Left ventricle myocardium superior (tissue), 1 donor: ENCODE measurements at regions of chr3 and their contacts with region 1.

Region 1: GRCh38 chr3:1529666-1530065 is 436.8 kb downstream of the CNTN6 start:
- DNase-seq: no peak
- ATAC-seq: no peak

Region 2: DNA sequence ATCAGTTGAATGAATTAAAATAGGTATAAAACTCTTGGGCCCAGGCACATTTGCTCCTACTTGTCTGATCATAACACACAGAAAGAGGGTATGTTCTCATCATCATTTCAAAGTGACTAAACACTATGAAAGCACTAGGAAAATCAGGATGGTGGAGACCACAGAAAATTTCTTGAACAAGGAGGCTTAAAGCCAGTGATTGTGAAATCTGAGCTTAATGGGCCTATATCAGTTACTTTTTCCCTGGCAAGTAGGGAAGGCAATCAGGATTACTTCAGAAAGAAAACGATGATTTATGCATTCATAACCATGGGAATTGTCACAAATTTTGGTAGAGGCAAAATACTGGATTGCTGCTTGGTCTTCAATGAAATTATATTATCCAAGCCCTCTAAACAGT is 134.6 kb after region 1 on chr3:
- intact Hi-C with region 1: no loop called
- DNase-seq: no peak
- ATAC-seq: no peak

Region 3: DNA sequence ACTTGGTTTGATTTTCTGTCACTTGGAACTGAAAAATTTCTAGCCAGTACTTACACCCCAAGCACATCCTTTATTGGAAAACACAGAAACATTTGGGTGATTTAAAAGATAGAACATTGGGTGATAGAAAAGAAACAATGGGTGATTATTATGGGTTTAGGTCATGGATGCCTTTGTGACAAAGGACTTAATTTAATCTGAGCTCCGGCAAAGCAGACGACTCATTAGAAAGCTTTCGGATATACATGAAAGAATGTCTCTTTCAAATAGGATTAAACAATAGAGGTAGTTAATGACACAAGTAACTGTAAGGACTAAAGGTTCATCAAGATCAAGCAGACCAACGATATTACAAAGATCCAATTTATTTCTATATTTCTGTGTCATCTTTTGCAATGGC is 531.7 kb after region 1 on chr3:
- intact Hi-C with region 1: loop called (anchors 10 kb)
- DNase-seq: no peak
- ATAC-seq: no peak